ENCODE measurements at regions of chrX and their contacts with region 1.

Region 1: GRCh38 chrX:111338095-111338698 is 67.9 kb upstream of the CAPN6 start:
- DNase-seq: no peak

Region 2: GRCh38 chrX:111280196-111280595 is 58.0 kb before region 1 on chrX:
- CTCF ChIA-PET with region 1: interaction called, 10 read pairs
- POLR2A ChIA-PET with region 1: no interaction called
- DNase-seq: no peak

Region 3: DNA sequence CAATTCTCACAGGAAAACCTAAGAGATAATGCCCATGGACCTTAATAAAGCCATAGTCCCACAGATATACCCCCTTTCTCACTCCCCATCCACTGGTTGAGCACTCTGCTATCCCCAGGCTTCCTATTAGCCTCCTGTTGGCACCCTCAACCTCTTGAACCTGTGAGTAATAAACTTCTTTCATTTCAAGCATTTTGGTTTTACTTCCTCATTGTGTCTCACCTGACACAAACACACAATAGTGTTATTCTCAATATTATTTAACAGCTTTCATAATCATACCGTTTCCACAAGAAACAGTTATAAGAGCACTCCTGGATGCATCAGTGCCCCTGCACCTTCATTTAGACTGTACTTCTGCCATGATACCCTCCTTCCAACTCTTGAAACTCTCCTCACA is 687.6 kb after region 1 on chrX:
- CTCF ChIA-PET with region 1: no interaction called
- POLR2A ChIA-PET with region 1: no interaction called
- DNase-seq: no peak

Measured in HEK293T (cell line).